Activated T-helper 2 cell treated with anti-CD3 and anti-CD28 coated beads, Interferon-gamma antibody, Interleukin-2, Interleukin-4, amounts not matched to agents 10 μg/mL and 5 μg/mL and 100 μg/mL, durations not matched to agents 14 hours and 24 hours and 36 hours (primary cell): ENCODE measurements at regions of chr9 and their contacts with region 1.

Region 1: GRCh38 chr9:14322211-14323082 is 8.5 kb upstream of the NFIB start:
- DNase-seq: peak; percentile 82
- H3K4me3 Mint-ChIP-seq: peak overlapping the region; percentile 86
- H3K27ac Mint-ChIP-seq: peak overlapping the region; percentile 83
- H3K4me1 Mint-ChIP-seq: peaks cover 22% of the 10 kb centered on the region
- H3K27me3 Mint-ChIP-seq: peaks cover 65% of the 10 kb centered on the region

Region 2: DNA sequence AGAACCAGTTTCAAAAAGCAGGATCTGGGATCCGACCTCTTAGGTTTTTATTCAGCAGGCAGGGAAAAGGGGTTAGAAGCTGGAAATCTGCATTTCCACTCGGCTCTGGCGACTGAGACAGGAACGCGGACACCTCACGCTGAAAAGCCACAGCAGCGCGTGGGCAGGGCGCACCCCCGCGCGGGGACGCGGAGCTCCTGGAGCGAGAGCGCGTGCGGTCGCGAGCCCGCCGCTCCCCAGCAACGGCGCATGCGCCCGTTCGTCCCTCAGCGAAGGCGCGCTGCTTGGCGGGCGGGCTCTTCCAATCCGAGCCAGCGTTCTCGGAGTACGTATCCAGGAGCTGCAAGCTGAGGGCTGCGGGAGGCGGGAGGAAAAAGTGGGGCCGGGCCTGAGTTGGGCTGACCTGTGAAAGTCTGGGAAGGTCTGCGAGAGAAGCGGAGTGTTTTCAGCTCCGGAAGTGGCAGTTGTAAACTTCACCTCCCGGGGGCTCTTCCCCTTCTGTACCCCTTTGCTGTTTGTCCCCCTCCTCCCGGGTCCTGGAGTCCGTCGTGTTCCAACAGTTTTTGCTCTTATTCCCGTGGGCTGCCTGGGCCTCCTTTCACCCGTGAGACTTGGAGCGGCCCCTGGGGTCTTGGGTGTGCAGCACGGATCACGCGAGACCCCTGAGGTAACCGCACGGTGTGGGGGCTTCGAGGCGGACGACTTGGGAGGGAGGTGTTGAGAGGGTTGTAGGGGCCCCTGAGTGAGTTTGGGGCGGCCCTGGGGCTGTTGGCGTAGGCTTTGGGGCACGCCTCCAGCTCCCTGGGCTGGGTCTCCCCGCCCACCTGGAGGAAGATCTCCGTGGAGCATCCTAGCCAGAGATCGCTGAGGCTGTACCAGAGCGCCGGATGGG is 1230.4 kb after region 1 on chr9 and contains the start of gene CCDC171:
- intact Hi-C with region 1: loop called (anchors 10 kb)
- DNase-seq: peak; percentile 84
- H3K4me3 Mint-ChIP-seq: peak within 1 kb of the TSS; percentile 87
- H3K27ac Mint-ChIP-seq: peak within 1 kb of the TSS; percentile 73
- H3K4me1 Mint-ChIP-seq: peaks cover 9% of the 10 kb centered on the region
- H3K27me3 Mint-ChIP-seq: peaks cover 14% of the 10 kb centered on the region
- total RNA-seq, gene CCDC171: 1.8 and 2.0 TPM in 2 replicates